CD8-positive, alpha-beta memory T cell (primary cell): ENCODE measurements at regions of chr1 and their contacts with region 1.

Region 1: DNA sequence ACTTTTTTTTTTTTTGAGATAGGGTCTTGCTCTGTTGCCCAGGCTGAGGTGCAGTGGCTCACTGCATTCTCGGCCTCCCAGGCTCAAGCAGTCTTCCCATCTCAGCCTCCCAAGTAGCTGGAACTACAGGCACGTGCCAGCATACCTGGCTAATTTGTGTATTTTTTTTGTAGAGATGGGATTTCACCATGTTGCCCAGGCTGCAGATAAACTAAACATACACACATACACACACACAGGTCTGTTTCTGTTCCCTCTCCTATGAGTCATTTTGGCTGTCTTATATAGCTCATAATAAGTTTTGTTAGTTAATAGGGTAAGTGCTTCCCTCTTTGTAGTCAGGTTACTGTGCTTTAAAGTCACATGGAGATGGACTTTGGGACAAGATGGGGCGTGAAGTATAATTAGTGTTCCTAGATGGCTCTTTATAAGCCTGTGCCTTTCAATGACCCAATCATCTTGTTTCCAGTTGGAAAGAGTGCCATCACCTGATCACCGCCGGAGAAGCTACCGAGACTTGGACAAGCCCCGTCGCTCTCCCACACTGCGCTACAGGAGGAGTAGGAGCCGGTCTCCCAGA is 9.1 kb downstream of the PRPF38A start:
- DNase-seq: no peak
- H3K4me3 ChIP-seq: no peak overlapping the region
- H3K4me3 Mint-ChIP-seq: no peak overlapping the region
- H3K27ac ChIP-seq: no peak overlapping the region
- H3K27ac Mint-ChIP-seq: peak overlapping the region in 2 of 8 donors; percentile 51 to 64
- H3K4me1 ChIP-seq: peaks cover 3% of the 10 kb centered on the region
- H3K4me1 Mint-ChIP-seq: peaks cover 8 to 19% (median 12%) of the 10 kb centered on the region in 3 donors
- H3K27me3 ChIP-seq: no peaks in the 10 kb centered on the region
- H3K27me3 Mint-ChIP-seq: no peaks in the 10 kb centered on the region

Region 2: GRCh38 chr1:52022133-52022532 is 391.4 kb before region 1 on chr1:
- CTCF ChIA-PET with region 1: no interaction called
- POLR2A ChIA-PET with region 1: interaction called, 12 read pairs
- DNase-seq: no peak
- H3K4me3 ChIP-seq: no peak overlapping the region
- H3K4me3 Mint-ChIP-seq: no peak overlapping the region
- H3K27ac ChIP-seq: no peak overlapping the region
- H3K27ac Mint-ChIP-seq: no peak overlapping the region
- H3K4me1 ChIP-seq: no peaks in the 10 kb centered on the region
- H3K4me1 Mint-ChIP-seq: peaks cover 0 to 6% (median 5%) of the 10 kb centered on the region in 3 donors
- H3K27me3 ChIP-seq: no peaks in the 10 kb centered on the region
- H3K27me3 Mint-ChIP-seq: no peaks in the 10 kb centered on the region